ENCODE measurements at regions of chr20 and their contacts with region 1.

Region 1: GRCh38 chr20:62143118-62143973 is at the starts of genes PSMA7 and SS18L1:
- DNase-seq: peak; percentile 83 to 92 (median 88)
- ATAC-seq: peak; percentile 87
- H3K4me3 ChIP-seq: peak within 1 kb of the TSS; percentile 89
- H3K27ac ChIP-seq: peak within 1 kb of the TSS; percentile 91
- H3K4me1 ChIP-seq: peaks cover 33 to 55% of the 10 kb centered on the region in 2 experiments; a peak in 4 of 5 replicates
- H3K27me3 ChIP-seq: no peaks in the 10 kb centered on the region
- CTCF ChIP-seq: no peak
- EP300 ChIP-seq: no peak
- POLR2A ChIP-seq: peak; percentile 74
- RAD21 ChIP-seq: no peak
- polyA plus RNA-seq, gene PSMA7: 303 to 393 TPM
- polyA plus RNA-seq, gene SS18L1: 2.7 to 3.0 TPM

Region 2: DNA sequence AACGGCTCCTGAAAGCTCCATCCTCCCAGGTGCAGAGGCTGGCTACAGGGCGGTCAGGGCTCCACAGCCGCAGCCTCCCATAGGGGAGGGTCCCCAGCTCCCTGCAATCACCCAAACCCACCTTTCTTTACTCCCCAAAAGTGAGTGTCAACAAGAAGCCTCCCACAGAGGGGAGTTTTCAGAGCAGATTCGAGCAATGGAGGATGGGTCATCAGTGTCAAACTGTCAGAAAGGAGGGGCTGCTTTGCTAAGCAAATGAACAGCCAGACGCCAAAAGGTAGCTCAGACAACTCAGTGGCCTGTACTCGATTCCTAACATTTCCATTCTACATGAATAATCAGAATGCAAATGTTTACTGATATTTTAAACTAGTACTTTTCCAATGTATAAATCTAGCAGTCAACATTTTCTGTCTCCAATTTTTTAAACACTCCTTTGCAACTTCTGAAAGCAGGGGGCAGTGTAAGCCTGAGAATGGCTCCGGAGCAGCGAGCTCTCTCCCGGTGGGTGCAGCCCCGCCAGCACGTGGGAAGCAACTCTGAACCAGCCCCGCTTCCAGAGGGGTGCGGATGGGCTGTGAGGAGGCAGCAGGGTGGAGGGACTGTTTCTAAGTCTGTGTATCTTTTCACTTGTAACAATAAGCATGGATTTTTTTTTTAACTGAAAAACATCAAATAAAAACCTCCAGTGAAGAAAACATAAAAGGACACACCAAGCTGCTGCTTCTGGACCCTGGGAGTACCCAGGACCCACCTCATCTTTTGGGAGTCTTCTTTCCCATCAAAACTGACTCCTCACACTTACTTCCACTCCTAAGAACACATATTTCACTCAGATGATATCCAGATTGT is 132.6 kb before region 1 on chr20:
- CTCF ChIA-PET with region 1: no interaction called
- POLR2A ChIA-PET with region 1: interaction called, 7 read pairs
- in situ Hi-C with region 1: no loop called
- intact Hi-C with region 1: loop called (anchors 5 kb)
- DNase-seq: peak; percentile 51 to 73 (median 62)
- ATAC-seq: peak; percentile 92
- H3K4me3 ChIP-seq: no peak overlapping the region
- H3K27ac ChIP-seq: no peak overlapping the region
- H3K4me1 ChIP-seq: peaks cover 0 to 19% of the 10 kb centered on the region in 2 experiments; a peak in 2 of 5 replicates
- H3K27me3 ChIP-seq: no peaks in the 10 kb centered on the region
- CTCF ChIP-seq: peak; percentile 70 to 87 (median 70)
- EP300 ChIP-seq: no peak
- POLR2A ChIP-seq: no peak
- RAD21 ChIP-seq: peak; percentile 81 to 85

Region 3: GRCh38 chr20:62025832-62026563 is 117.3 kb before region 1 on chr20:
- CTCF ChIA-PET with region 1: no interaction called
- POLR2A ChIA-PET with region 1: interaction called, 3 read pairs
- in situ Hi-C with region 1: loop called (anchors 5 kb)
- intact Hi-C with region 1: loop called (anchors 5 kb)
- DNase-seq: peak; percentile 59 to 74 (median 66)
- ATAC-seq: peak; percentile 89
- H3K4me3 ChIP-seq: no peak overlapping the region
- H3K27ac ChIP-seq: peak overlapping the region; percentile 81
- H3K4me1 ChIP-seq: peaks cover 20 to 50% of the 10 kb centered on the region in 2 experiments
- H3K27me3 ChIP-seq: no peaks in the 10 kb centered on the region
- CTCF ChIP-seq: peak; percentile 66 to 81 (median 75)
- EP300 ChIP-seq: no peak; the same call in 1 of the 2 replicates
- POLR2A ChIP-seq: no peak
- RAD21 ChIP-seq: peak; percentile 41 to 73

Region 4: GRCh38 chr20:62065669-62066338 is 77.5 kb before region 1 on chr20 and contains the start of gene TAF4:
- CTCF ChIA-PET with region 1: interaction called, 3 read pairs
- POLR2A ChIA-PET with region 1: interaction called, 3 read pairs
- in situ Hi-C with region 1: no loop called
- intact Hi-C with region 1: loop called (anchors 5 kb)
- DNase-seq: peak; percentile 78 to 99 (median 98)
- ATAC-seq: peak; percentile 71
- H3K4me3 ChIP-seq: peak within 1 kb of the TSS; percentile 64
- H3K27ac ChIP-seq: peak within 1 kb of the TSS; percentile 79
- H3K4me1 ChIP-seq: peaks cover 19 to 36% of the 10 kb centered on the region in 2 experiments
- H3K27me3 ChIP-seq: no peaks in the 10 kb centered on the region; a peak in 1 of 5 replicates
- CTCF ChIP-seq: no peak
- EP300 ChIP-seq: no peak
- POLR2A ChIP-seq: peak; percentile 54; the same call in 1 of the 2 replicates
- RAD21 ChIP-seq: no peak
- polyA plus RNA-seq, gene TAF4: 0.44 to 0.48 TPM

Region 5: GRCh38 chr20:62121776-62122631 is 21.3 kb before region 1 on chr20 and contains the start of gene LSM14B:
- CTCF ChIA-PET with region 1: no interaction called
- POLR2A ChIA-PET with region 1: interaction called, 78 read pairs
- in situ Hi-C with region 1: no loop called
- intact Hi-C with region 1: no loop called
- DNase-seq: peak; percentile 96 to 99 (median 97)
- ATAC-seq: peak; percentile 92
- H3K4me3 ChIP-seq: peak within 1 kb of the TSS; percentile 87
- H3K27ac ChIP-seq: peak within 1 kb of the TSS; percentile 98
- H3K4me1 ChIP-seq: peaks cover 13 to 45% of the 10 kb centered on the region in 2 experiments; a peak in 4 of 5 replicates
- H3K27me3 ChIP-seq: peaks cover 7 to 22% of the 10 kb centered on the region in 2 experiments; a peak in 4 of 5 replicates
- CTCF ChIP-seq: no peak
- EP300 ChIP-seq: peak; percentile 30; the same call in 1 of the 2 replicates
- POLR2A ChIP-seq: peak; percentile 53; the same call in 1 of the 2 replicates
- RAD21 ChIP-seq: no peak
- polyA plus RNA-seq, gene LSM14B: 0.66 to 0.83 TPM

Region 6: GRCh38 chr20:62386383-62387218 is 243.3 kb after region 1 on chr20 and contains the start of gene RPS21:
- CTCF ChIA-PET with region 1: no interaction called
- POLR2A ChIA-PET with region 1: no interaction called
- in situ Hi-C with region 1: no loop called
- intact Hi-C with region 1: loop called (anchors 10 kb)
- DNase-seq: peak; percentile 87 to 96 (median 92)
- ATAC-seq: peak; percentile 92
- H3K4me3 ChIP-seq: peak within 1 kb of the TSS; percentile 100
- H3K27ac ChIP-seq: peak within 1 kb of the TSS; percentile 95
- H3K4me1 ChIP-seq: peaks cover 13 to 39% of the 10 kb centered on the region in 2 experiments; a peak in 4 of 5 replicates
- H3K27me3 ChIP-seq: no peaks in the 10 kb centered on the region
- CTCF ChIP-seq: no peak
- EP300 ChIP-seq: no peak; the same call in 1 of the 2 replicates
- POLR2A ChIP-seq: peak; percentile 92
- RAD21 ChIP-seq: no peak
- polyA plus RNA-seq, gene RPS21: 3,588 to 3,968 TPM